ENCODE measurements at regions of chr17 and their contacts with region 1.

Region 1: GRCh38 chr17:56640116-56640515 is 46.6 kb downstream of the NOG start:
- DNase-seq: no peak
- ATAC-seq: no peak
- H3K4me3 Mint-ChIP-seq: no peak overlapping the region
- H3K27ac Mint-ChIP-seq: no peak overlapping the region
- H3K4me1 Mint-ChIP-seq: peaks cover 7% of the 10 kb centered on the region
- H3K27me3 Mint-ChIP-seq: no peaks in the 10 kb centered on the region
- CTCF ChIP-seq: no peak

Region 2: GRCh38 chr17:56313201-56313600 is 326.9 kb before region 1 on chr17:
- CTCF ChIA-PET with region 1: no interaction called
- POLR2A ChIA-PET with region 1: no interaction called
- intact Hi-C with region 1: no loop called
- DNase-seq: no peak
- ATAC-seq: no peak
- H3K4me3 Mint-ChIP-seq: no peak overlapping the region
- H3K27ac Mint-ChIP-seq: no peak overlapping the region
- H3K4me1 Mint-ChIP-seq: no peaks in the 10 kb centered on the region
- H3K27me3 Mint-ChIP-seq: peaks cover 4% of the 10 kb centered on the region
- CTCF ChIP-seq: no peak

Region 3: DNA sequence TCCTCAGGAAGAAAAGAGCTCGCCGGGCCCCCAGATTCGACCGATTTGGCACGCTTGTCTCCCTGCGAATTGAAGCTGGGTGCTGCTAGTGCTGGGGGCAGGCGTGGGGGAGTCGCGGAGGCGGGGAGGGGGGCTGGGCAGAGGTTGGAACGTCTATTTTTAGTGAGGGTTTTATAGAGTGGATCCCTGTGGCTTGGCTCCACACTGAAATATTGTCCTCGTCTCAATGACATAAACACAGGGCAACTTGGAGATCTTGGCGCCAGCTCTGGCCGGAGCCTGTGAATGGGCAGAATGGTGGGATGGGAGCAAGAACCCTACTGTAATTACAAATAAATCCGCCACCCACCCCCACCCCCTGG is 62.3 kb before region 1 on chr17:
- CTCF ChIA-PET with region 1: no interaction called
- POLR2A ChIA-PET with region 1: no interaction called
- intact Hi-C with region 1: no loop called
- DNase-seq: no peak
- ATAC-seq: no peak
- H3K4me3 Mint-ChIP-seq: no peak overlapping the region
- H3K27ac Mint-ChIP-seq: no peak overlapping the region
- H3K4me1 Mint-ChIP-seq: no peaks in the 10 kb centered on the region
- H3K27me3 Mint-ChIP-seq: peaks cover 8% of the 10 kb centered on the region
- CTCF ChIP-seq: no peak

Region 4: DNA sequence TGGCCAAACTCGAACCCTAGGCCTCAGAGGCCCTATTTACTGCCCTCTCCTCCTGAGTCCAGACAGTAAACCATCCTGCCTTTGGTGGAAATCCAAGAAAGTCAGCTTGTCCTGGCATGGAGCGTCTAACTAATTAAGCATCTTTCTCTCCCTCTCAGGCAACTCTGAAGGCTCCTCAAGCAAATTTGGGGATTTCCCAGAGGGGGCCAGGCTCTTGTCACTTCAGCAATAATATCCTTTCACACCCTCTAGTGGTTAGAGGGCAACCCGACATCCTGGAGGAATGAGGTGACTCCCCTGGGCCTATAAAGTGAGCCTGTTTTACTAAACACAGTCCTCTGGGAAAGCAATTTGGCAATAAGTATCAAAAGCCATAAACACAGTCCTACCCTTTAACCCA is 13.8 kb after region 1 on chr17:
- CTCF ChIA-PET with region 1: interaction called, 12 read pairs
- POLR2A ChIA-PET with region 1: no interaction called
- intact Hi-C with region 1: no loop called
- DNase-seq: peak; percentile 86
- ATAC-seq: peak; percentile 99
- H3K4me3 Mint-ChIP-seq: no peak overlapping the region
- H3K27ac Mint-ChIP-seq: peak overlapping the region; percentile 8
- H3K4me1 Mint-ChIP-seq: peaks cover 6% of the 10 kb centered on the region
- H3K27me3 Mint-ChIP-seq: no peaks in the 10 kb centered on the region
- CTCF ChIP-seq: peak; percentile 74